ENCODE measurements at regions of chr2 and their contacts with region 1.

Region 1: GRCh38 chr2:27184115-27184514 is 27.7 kb upstream of the ATRAID start:
- DNase-seq: no peak
- ATAC-seq: no peak
- H3K4me3 ChIP-seq: no peak overlapping the region
- H3K4me3 Mint-ChIP-seq: no peak overlapping the region
- H3K27ac ChIP-seq: no peak overlapping the region
- H3K27ac Mint-ChIP-seq: no peak overlapping the region
- H3K4me1 ChIP-seq: no peaks in the 10 kb centered on the region
- H3K4me1 Mint-ChIP-seq: no peaks in the 10 kb centered on the region
- H3K27me3 ChIP-seq: peaks cover 10 to 11% of the 10 kb centered on the region in 2 experiments
- H3K27me3 Mint-ChIP-seq: peaks cover 39% of the 10 kb centered on the region
- CTCF ChIP-seq: no peak

Region 2: DNA sequence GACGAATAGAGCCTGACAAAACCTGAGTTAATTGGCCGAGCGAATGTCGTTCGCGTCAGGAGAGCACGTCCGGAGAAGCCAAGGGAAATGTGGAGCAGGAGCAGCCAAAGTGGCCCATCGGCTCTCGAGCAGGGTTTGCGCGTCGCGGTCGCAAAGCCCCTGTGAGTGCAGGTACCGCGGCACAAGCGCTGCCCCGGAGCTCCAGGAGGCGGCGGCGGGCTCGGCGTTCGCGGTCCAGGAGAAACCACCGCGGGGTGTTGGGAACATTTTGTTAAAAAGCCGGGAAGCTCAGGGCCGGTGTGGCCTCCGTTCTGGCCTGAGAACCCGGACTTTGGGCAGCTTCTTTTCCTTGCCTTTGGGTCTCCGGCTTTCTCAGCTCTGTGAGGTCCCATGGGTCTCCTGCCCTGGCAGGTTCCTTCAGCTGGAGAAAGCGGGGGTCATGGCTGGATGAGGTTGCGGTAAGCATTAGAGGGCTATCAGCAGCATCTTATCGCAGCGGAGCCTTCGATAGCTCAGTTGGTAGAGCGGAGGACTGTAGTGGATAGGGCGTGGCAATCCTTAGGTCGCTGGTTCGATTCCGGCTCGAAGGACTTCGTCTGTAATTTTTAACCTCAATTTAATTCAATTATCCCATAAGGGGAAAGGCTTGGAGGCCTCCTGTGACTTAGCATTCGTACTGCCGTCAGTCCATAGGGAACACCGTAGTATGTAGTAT is 133.7 kb before region 1 on chr2:
- CTCF ChIA-PET with region 1: no interaction called
- POLR2A ChIA-PET with region 1: no interaction called
- intact Hi-C with region 1: no loop called
- DNase-seq: peak; percentile 86 to 97 (median 92)
- ATAC-seq: peak; percentile 57
- H3K4me3 ChIP-seq: peak overlapping the region; percentile 76
- H3K4me3 Mint-ChIP-seq: peak overlapping the region; percentile 100
- H3K27ac ChIP-seq: peak overlapping the region; percentile 77 to 83
- H3K27ac Mint-ChIP-seq: peak overlapping the region; percentile 100
- H3K4me1 ChIP-seq: peaks cover 20% of the 10 kb centered on the region
- H3K4me1 Mint-ChIP-seq: peaks cover 27% of the 10 kb centered on the region
- H3K27me3 ChIP-seq: no peaks in the 10 kb centered on the region
- H3K27me3 Mint-ChIP-seq: peaks cover 15% of the 10 kb centered on the region
- CTCF ChIP-seq: peak; percentile 42

Region 3: DNA sequence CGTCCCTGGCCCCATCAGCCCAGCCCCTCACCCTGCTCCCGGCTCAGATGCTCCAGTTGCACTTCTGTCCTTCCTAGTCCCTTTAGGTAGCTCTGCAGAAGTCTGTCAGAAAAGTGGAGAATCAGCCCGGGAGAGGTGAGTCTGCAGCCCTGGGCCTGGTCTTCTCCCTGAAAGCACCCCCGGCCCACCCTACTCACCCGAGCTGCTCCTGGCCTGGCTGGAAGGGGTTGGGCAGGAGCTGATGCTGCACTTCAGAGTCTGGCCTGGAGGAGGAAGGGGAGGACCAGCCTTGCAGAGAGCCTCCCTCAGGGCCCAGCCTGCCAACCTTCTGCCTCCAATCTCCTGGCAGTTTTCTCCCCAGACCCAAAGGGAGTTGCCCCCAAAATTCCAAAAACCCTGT is 81.8 kb before region 1 on chr2:
- CTCF ChIA-PET with region 1: no interaction called
- POLR2A ChIA-PET with region 1: no interaction called
- intact Hi-C with region 1: loop called in 1 of 2 experiments (anchors 5 kb)
- DNase-seq: no peak
- ATAC-seq: no peak
- H3K4me3 ChIP-seq: no peak overlapping the region
- H3K4me3 Mint-ChIP-seq: no peak overlapping the region
- H3K27ac ChIP-seq: no peak overlapping the region
- H3K27ac Mint-ChIP-seq: no peak overlapping the region
- H3K4me1 ChIP-seq: no peaks in the 10 kb centered on the region
- H3K4me1 Mint-ChIP-seq: no peaks in the 10 kb centered on the region
- H3K27me3 ChIP-seq: no peaks in the 10 kb centered on the region
- H3K27me3 Mint-ChIP-seq: peaks cover 10% of the 10 kb centered on the region
- CTCF ChIP-seq: no peak